Calu3 (cell line): ENCODE measurements at regions of chr12 and their contacts with region 1.

Region 1: DNA sequence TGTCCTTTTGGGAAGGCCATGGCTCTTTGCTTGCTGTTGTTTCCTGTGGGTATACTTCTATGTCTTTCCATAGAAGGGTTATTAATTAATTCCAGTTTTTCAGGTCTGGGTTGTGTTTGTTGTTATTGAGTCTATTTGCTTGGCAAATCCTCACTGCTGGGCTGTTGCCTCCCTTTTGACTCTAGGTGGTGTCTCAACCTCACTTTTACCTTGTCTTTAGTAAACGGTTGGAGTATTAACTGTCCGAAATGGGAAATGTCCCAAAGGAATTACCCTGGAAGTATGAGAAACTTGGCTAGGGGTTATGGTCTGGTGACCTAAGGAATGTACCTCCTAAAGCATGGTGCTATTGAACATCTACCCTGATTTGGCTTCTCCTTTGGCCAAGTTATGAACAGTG is 16.7 kb downstream of the PRH1 start:
- DNase-seq: no peak
- H3K4me3 Mint-ChIP-seq: no peak overlapping the region
- H3K27ac Mint-ChIP-seq: no peak overlapping the region
- H3K4me1 Mint-ChIP-seq: no peaks in the 10 kb centered on the region
- H3K27me3 Mint-ChIP-seq: no peaks in the 10 kb centered on the region
- CTCF ChIP-seq: no peak

Region 2: DNA sequence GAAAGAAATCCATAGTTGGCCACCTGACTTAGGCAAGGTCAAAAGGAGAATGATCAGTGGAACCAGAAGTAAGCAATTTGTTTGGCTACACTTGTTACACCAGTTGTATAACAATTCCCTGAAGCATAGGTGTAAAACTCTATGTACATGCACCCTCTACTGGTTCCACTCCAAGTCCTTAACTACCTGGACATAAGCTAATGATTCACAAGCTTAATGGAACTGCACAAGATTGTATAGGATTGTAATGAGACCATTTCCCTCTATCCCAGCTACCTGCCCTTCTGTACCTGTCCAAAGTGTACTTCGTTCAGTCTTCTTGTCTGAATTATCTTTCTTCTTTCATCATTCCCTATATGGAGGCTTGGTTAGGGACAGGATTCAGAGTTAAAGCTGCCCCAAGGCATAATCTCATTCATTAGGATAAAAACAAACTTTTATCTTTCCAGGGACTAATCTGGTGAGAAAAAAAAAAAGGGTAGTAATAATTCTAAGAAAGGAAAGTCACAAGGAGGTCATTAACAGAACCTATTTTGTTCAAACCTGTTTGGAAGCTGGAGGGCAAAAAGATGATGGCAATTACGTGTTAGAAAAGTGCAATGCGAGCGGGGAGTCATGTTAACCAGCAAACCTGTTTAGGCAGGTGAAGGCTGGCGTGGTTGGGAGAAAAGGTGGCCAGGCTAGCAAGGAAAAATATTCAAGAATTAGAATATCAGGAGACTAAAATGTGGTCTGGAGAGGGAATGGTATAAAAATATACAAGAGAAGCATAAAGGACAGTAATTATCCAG is 691.3 kb before region 1 on chr12:
- CTCF ChIA-PET with region 1: no interaction called
- intact Hi-C with region 1: loop called (anchors 5 kb)
- DNase-seq: no peak
- H3K4me3 Mint-ChIP-seq: no peak overlapping the region
- H3K27ac Mint-ChIP-seq: no peak overlapping the region
- H3K4me1 Mint-ChIP-seq: peaks cover 19% of the 10 kb centered on the region
- H3K27me3 Mint-ChIP-seq: peaks cover 15% of the 10 kb centered on the region
- CTCF ChIP-seq: no peak

Region 3: DNA sequence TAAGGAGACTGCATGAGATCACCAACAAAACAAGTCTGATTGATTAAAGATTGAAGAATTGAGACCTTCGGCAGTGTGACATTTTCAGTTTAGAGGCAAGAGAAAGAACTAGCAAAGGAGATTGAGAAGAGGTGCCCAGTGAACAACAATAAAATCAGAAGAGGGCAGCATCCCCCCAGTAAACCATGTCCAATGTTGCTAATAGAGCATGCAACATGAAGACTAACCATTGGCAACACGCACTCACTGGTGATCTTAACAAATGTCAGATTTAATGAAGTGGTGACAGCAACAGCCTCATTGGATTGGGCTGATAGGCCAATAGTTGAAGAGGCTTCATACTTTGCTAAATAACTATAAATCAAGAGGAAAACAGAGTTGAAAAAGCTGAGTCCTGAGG is 92.4 kb after region 1 on chr12:
- CTCF ChIA-PET with region 1: no interaction called
- intact Hi-C with region 1: no loop called
- DNase-seq: no peak
- H3K4me3 Mint-ChIP-seq: no peak overlapping the region
- H3K27ac Mint-ChIP-seq: no peak overlapping the region
- H3K4me1 Mint-ChIP-seq: peaks cover 16% of the 10 kb centered on the region
- H3K27me3 Mint-ChIP-seq: no peaks in the 10 kb centered on the region
- CTCF ChIP-seq: no peak

Region 4: GRCh38 chr12:11162502-11162901 is 295.1 kb after region 1 on chr12:
- CTCF ChIA-PET with region 1: no interaction called
- intact Hi-C with region 1: no loop called
- DNase-seq: no peak
- H3K4me3 Mint-ChIP-seq: no peak overlapping the region
- H3K27ac Mint-ChIP-seq: no peak overlapping the region
- H3K4me1 Mint-ChIP-seq: no peaks in the 10 kb centered on the region
- H3K27me3 Mint-ChIP-seq: no peaks in the 10 kb centered on the region
- CTCF ChIP-seq: no peak